ENCODE measurements at regions of chr2 and their contacts with region 1.

Region 1: DNA sequence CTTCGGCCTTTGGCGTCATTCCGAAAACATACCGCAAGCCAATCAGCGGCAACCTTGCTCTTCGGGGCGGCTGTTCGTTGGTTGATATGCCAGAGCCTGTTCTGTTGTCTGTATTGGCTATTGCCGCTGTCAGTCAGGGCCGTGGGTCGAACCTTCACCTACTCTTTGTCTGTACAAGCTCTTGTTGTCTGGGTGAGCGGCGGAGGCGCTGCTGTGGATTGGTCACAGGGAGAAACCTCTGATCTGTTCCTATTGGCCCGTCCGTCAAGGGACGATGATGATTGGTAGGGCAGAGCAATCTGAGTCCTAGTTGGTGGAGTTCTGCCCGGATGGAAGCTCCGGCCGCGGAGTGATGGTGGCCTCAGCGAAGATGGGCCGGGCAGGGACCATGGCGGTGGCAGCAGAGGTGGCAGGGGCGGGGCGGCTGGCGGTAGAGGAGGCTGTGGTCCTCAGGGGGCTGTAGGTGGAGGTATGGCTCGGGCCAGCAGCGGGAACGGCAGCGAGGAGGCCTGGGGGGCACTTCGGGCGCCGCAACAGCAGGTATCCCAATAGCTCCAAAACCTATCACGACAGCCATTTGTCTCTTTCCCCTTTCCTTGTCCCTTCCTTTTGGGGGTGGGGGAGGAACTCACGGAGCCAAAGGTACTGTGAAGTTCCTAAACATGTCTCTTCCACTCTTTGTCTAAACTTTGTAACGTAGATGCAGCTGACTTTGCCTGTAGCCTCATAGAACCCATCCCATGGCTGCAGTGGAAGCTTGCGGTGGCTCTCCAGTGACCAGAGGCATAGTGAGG is at the start of gene WBP1:
- DNase-seq: peak; percentile 100
- ATAC-seq: peak; percentile 92
- H3K4me3 ChIP-seq: peak within 1 kb of the TSS; percentile 76 to 92 (median 88)
- H3K27ac ChIP-seq: peak within 1 kb of the TSS; percentile 89
- H3K4me1 ChIP-seq: peaks cover 41% of the 10 kb centered on the region
- H3K27me3 ChIP-seq: no peaks in the 10 kb centered on the region; a peak in 1 of 5 replicates
- CTCF ChIP-seq: no peak
- EP300 ChIP-seq: no peak; a peak in 1 of 4 replicates
- POLR2A ChIP-seq: peak in 1 of 2 experiments; percentile 62; a peak in 2 of 4 replicates
- RAD21 ChIP-seq: 0 out of 2 replicates have a peak, but pooled peaks have one; percentile 26
- total RNA-seq, gene WBP1: 26.5 and 38.8 TPM in 2 replicates

Region 2: GRCh38 chr2:74421221-74421870 is 37.0 kb before region 1 on chr2 and contains the starts of genes C2orf81 and WDR54:
- CTCF ChIA-PET with region 1: no interaction called
- POLR2A ChIA-PET with region 1: interaction called, 24 read pairs
- in situ Hi-C with region 1: no loop called
- intact Hi-C with region 1: no loop called
- DNase-seq: peak; percentile 75
- ATAC-seq: peak; percentile 78
- H3K4me3 ChIP-seq: peak within 1 kb of the TSS; percentile 50 to 75 (median 54)
- H3K27ac ChIP-seq: no peak within 1 kb of the TSS
- H3K4me1 ChIP-seq: peaks cover 54% of the 10 kb centered on the region
- H3K27me3 ChIP-seq: peaks cover 0 to 7% of the 10 kb centered on the region in 2 experiments; a peak in 2 of 5 replicates
- CTCF ChIP-seq: peak; percentile 14; the same call in 1 of the 2 replicates
- EP300 ChIP-seq: no peak
- POLR2A ChIP-seq: peak; percentile 37 to 41; a peak in 2 of 4 replicates
- RAD21 ChIP-seq: no peak; the same call in 1 of the 2 replicates
- total RNA-seq, gene C2orf81: 0.13 and 0.15 TPM in 2 replicates
- total RNA-seq, gene WDR54: 1.3 and 2.0 TPM in 2 replicates

Region 3: GRCh38 chr2:74472086-74472944 is 14.0 kb after region 1 on chr2 and contains the start of gene MRPL53:
- CTCF ChIA-PET with region 1: no interaction called
- POLR2A ChIA-PET with region 1: interaction called, 51 read pairs
- in situ Hi-C with region 1: no loop called
- intact Hi-C with region 1: loop called (anchors 2 kb)
- DNase-seq: peak; percentile 92
- ATAC-seq: peak; percentile 87
- H3K4me3 ChIP-seq: peak within 1 kb of the TSS; percentile 67 to 91 (median 83)
- H3K27ac ChIP-seq: peak within 1 kb of the TSS; percentile 83
- H3K4me1 ChIP-seq: peaks cover 52% of the 10 kb centered on the region
- H3K27me3 ChIP-seq: no peaks in the 10 kb centered on the region; a peak in 1 of 5 replicates
- CTCF ChIP-seq: peak; percentile 42; the same call in 1 of the 2 replicates
- EP300 ChIP-seq: peak in 1 of 2 experiments; percentile 54; a peak in 2 of 4 replicates
- POLR2A ChIP-seq: peak; percentile 94 to 97
- RAD21 ChIP-seq: peak; percentile 45; the same call in 1 of the 2 replicates
- total RNA-seq, gene MRPL53: 51.9 and 53.8 TPM in 2 replicates

Region 4: DNA sequence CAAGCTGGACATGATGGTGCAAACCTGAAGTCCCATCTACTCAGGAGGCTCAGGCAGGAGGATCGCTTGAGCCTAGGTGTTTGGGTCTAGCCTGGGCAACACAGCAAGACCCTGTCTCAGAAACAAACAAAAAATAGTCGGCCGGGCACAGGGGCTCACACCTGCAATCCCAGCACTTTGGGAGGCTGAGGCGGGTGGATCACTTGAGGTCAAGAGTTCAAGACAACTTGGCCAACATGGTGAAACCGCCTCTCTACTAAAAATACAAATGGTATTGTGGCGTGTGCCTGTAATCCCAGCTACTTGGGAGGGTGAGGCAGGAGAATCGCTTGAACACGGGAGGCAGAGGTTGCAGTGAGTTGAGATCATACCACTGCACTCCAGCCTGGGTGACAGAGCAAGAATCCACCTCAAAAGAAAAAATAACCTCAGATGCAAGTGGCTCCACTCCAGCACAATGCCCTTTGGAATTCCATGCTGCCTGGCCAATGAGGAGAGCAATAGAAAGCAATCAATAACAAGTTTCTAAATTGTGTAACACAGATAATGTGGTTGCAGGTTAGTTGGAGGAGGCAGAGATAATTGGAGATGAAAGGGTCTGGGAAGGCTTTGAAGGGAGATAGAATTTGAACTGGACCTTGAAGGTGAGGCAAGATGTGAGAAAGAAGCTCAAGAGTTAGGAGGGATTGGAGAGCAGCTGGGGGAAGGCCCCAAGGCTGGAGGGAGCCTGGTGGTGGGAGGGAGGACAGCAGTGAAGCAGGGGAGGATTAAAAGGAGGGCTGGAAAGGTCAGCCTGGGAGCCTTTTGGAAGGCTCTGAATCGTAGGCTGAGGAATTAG is 30.5 kb after region 1 on chr2:
- CTCF ChIA-PET with region 1: no interaction called
- POLR2A ChIA-PET with region 1: interaction called, 93 read pairs
- in situ Hi-C with region 1: no loop called
- intact Hi-C with region 1: no loop called
- DNase-seq: peak; percentile 93
- ATAC-seq: peak; percentile 83
- H3K4me3 ChIP-seq: peak overlapping the region in 1 of 3 experiments; percentile 18; a peak in 2 of 6 replicates
- H3K27ac ChIP-seq: peak overlapping the region; percentile 84
- H3K4me1 ChIP-seq: peaks cover 77% of the 10 kb centered on the region
- H3K27me3 ChIP-seq: no peaks in the 10 kb centered on the region
- CTCF ChIP-seq: 0 out of 2 replicates have a peak, but pooled peaks have one; percentile 3
- EP300 ChIP-seq: peak; percentile 92 to 98
- POLR2A ChIP-seq: peak; percentile 28 to 65; a peak in 1 of 4 replicates
- RAD21 ChIP-seq: no peak

Measured in HepG2 (cell line).